ENCODE measurements at regions of chr3 and their contacts with region 1.

Region 1: DNA sequence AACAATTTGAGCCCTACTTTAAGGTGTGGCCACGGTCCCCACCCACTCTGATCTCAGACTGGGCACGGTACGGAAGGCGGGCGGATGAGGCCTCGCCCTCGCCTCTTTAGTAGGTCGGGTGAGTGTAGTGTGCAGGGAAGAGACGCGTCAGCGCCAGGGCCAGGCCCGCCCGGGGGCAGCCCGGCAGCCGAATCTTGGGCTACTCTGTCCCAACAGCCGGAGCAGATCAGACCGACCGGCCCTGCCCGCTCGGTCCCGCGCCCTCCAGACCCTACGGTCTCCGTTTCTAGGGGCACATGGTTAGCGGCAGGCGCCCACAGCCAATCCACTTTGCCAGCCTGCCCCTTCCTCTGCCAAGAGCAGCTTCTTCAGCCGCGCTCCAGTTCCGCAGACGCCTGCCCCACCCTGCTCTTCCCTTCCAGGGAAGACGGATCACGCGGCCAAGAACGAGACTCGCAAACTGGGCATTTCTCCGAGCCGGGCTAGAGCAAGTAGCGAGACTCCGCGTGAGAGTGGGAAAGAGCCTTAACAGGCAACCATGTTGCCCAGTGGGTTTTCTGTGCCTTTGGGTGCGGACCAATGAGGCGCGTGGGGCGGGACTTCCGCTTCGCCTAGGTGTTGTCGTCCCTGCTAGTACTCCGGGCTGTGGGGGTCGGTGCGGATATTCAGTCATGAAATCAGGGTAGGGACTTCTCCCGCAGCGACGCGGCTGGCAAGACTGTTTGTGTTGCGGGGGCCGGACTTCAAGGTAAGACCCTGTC is at the start of gene RNF13:
- DNase-seq: peak; percentile 83 to 96 (median 93)
- ATAC-seq: peak; percentile 95
- H3K4me3 ChIP-seq: peak within 1 kb of the TSS; percentile 91 to 94
- H3K4me3 Mint-ChIP-seq: peak within 1 kb of the TSS; percentile 99
- H3K27ac ChIP-seq: peak within 1 kb of the TSS; percentile 94 to 95
- H3K27ac Mint-ChIP-seq: peak within 1 kb of the TSS; percentile 100
- H3K4me1 ChIP-seq: peaks cover 29% of the 10 kb centered on the region
- H3K4me1 Mint-ChIP-seq: peaks cover 49% of the 10 kb centered on the region
- H3K27me3 ChIP-seq: no peaks in the 10 kb centered on the region
- H3K27me3 Mint-ChIP-seq: peaks cover 4% of the 10 kb centered on the region
- CTCF ChIP-seq: no peak
- total RNA-seq, gene RNF13: 33.9 to 36.5 TPM

Region 2: GRCh38 chr3:149114458-149114857 is 698.3 kb before region 1 on chr3:
- CTCF ChIA-PET with region 1: interaction called, 6 read pairs
- POLR2A ChIA-PET with region 1: no interaction called
- intact Hi-C with region 1: loop called in 1 of 2 experiments (anchors 5 kb)
- DNase-seq: no peak
- ATAC-seq: no peak
- H3K4me3 ChIP-seq: no peak overlapping the region
- H3K4me3 Mint-ChIP-seq: no peak overlapping the region
- H3K27ac ChIP-seq: no peak overlapping the region
- H3K27ac Mint-ChIP-seq: no peak overlapping the region
- H3K4me1 ChIP-seq: no peaks in the 10 kb centered on the region
- H3K4me1 Mint-ChIP-seq: no peaks in the 10 kb centered on the region
- H3K27me3 ChIP-seq: no peaks in the 10 kb centered on the region
- H3K27me3 Mint-ChIP-seq: no peaks in the 10 kb centered on the region
- CTCF ChIP-seq: no peak

Region 3: DNA sequence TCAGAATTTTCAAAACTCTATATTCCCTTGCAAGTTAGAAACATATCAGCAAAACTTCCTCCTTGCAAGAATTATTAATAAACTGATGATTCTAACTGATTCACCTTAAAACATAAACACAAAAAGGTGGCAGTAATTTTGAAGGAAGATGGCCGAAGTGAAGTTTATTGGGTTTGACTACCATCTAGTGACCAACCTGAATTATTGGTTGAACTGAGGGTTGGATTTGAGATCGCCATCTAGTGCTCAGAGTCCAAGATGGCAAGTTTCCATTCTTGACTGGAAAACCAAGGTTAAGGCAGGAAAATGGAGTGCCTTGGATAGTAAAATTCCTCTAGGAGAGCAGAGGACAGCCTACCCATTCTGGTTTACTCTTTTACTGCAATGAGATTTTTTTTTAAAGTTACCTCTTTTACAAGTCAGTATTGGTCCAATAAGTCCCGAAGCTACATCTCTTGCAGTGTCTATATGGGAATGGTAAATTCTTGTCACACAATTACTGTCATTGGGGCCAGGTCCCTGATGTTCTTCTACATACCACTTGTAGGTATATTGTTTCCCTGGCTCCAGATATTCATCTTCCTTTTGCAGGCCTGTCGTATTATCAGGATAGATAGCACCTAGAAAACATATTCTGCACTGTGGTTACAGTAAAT is 539.6 kb before region 1 on chr3:
- CTCF ChIA-PET with region 1: no interaction called
- POLR2A ChIA-PET with region 1: no interaction called
- intact Hi-C with region 1: loop called in 1 of 2 experiments (anchors 10 kb)
- DNase-seq: peak in 3 of 9 experiments; percentile 22 to 85 (median 76)
- ATAC-seq: peak; percentile 86
- H3K4me3 ChIP-seq: no peak overlapping the region
- H3K4me3 Mint-ChIP-seq: no peak overlapping the region
- H3K27ac ChIP-seq: no peak overlapping the region
- H3K27ac Mint-ChIP-seq: no peak overlapping the region
- H3K4me1 ChIP-seq: peaks cover 13% of the 10 kb centered on the region
- H3K4me1 Mint-ChIP-seq: peaks cover 12% of the 10 kb centered on the region
- H3K27me3 ChIP-seq: no peaks in the 10 kb centered on the region
- H3K27me3 Mint-ChIP-seq: no peaks in the 10 kb centered on the region
- CTCF ChIP-seq: peak; percentile 89

Region 4: DNA sequence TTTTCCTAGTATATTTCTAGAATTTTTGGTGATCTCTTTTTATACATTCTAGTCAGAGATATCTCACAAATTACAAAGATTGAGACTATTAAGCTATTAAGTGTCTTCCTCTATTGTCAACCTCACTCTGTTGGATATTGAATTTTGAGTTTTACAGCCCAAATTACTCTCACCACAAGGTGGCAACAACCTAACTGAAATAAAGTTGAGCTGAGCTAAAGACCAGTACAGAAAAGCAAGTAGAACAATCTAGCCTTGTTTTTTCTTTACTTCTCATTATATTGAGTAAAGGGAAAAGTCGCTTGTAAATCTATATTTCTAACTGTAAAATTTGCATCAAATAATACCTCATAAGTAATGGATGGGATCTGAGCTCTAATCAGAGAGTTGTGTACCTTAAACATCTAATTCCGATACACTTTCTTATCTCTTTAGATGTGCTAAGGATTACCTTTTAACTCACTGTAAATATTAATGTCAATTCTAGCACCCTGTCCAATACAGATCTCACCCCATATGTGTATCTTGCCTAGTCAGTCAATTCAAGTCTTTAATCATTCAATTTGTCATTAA is 46.9 kb before region 1 on chr3:
- CTCF ChIA-PET with region 1: interaction called, 17 read pairs
- POLR2A ChIA-PET with region 1: no interaction called
- intact Hi-C with region 1: loop called in 1 of 2 experiments (anchors 1 kb)
- DNase-seq: peak in 1 of 9 experiments; percentile 21
- ATAC-seq: no peak
- H3K4me3 ChIP-seq: no peak overlapping the region
- H3K4me3 Mint-ChIP-seq: no peak overlapping the region
- H3K27ac ChIP-seq: no peak overlapping the region
- H3K27ac Mint-ChIP-seq: no peak overlapping the region
- H3K4me1 ChIP-seq: no peaks in the 10 kb centered on the region
- H3K4me1 Mint-ChIP-seq: no peaks in the 10 kb centered on the region
- H3K27me3 ChIP-seq: no peaks in the 10 kb centered on the region
- H3K27me3 Mint-ChIP-seq: peaks cover 19% of the 10 kb centered on the region
- CTCF ChIP-seq: no peak

Region 5: DNA sequence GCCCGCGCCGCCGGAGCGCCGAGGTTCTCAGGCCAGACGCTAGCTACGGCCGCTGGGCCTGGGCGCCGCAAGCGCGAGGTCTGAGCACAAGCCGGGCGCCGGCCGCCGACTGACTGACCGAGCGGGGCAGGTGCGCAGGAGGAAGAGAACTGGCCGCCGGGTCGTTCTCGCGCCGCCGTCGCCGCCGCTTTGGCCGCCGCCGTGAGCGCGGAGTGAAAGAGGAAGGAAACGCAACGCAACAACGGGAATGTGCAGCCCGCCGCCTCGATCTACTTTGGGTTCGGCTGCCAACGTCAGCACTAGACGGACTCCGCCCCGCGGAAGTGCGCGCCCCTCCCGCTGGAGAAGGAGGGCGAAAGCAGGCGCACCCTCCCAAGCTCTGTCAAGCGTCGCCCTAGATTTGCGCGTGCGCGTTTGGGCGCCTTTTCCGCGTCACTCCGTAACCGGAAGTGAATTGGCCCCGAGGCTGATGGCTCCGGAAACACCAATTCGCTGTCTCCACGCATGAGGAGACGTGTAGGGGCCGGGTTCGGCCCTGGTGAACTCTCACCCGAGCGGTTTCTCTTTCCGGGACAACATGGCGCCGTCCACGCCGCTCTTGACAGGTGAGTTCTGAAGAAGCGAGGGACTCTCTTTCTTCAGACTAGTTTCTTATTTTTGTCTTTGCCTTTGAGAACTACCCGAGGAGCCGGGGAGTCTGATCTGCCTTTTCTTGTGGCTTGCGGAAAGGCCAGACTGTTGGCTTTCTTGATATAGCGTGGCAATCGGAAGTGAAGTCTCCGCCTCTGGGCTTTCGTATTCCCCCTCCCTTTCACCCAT is 733.6 kb after region 1 on chr3 and contains the starts of genes EIF2A and SERP1:
- CTCF ChIA-PET with region 1: no interaction called
- POLR2A ChIA-PET with region 1: no interaction called
- intact Hi-C with region 1: loop called (anchors 1 to 10 kb)
- DNase-seq: peak; percentile 99 to 100 (median 99)
- ATAC-seq: peak; percentile 88
- H3K4me3 ChIP-seq: peak within 1 kb of the TSS; percentile 61 to 84
- H3K4me3 Mint-ChIP-seq: peak within 1 kb of the TSS; percentile 97
- H3K27ac ChIP-seq: peak within 1 kb of the TSS; percentile 91 to 98
- H3K27ac Mint-ChIP-seq: peak within 1 kb of the TSS; percentile 99
- H3K4me1 ChIP-seq: peaks cover 36% of the 10 kb centered on the region
- H3K4me1 Mint-ChIP-seq: peaks cover 74% of the 10 kb centered on the region
- H3K27me3 ChIP-seq: no peaks in the 10 kb centered on the region
- H3K27me3 Mint-ChIP-seq: no peaks in the 10 kb centered on the region
- CTCF ChIP-seq: no peak
- total RNA-seq, gene EIF2A: 156 to 162 TPM
- total RNA-seq, gene SERP1: 143 to 151 TPM

Measured in CD8-positive, alpha-beta T cell (primary cell).